ENCODE measurements at regions of chr9 and their contacts with region 1.

Region 1: DNA sequence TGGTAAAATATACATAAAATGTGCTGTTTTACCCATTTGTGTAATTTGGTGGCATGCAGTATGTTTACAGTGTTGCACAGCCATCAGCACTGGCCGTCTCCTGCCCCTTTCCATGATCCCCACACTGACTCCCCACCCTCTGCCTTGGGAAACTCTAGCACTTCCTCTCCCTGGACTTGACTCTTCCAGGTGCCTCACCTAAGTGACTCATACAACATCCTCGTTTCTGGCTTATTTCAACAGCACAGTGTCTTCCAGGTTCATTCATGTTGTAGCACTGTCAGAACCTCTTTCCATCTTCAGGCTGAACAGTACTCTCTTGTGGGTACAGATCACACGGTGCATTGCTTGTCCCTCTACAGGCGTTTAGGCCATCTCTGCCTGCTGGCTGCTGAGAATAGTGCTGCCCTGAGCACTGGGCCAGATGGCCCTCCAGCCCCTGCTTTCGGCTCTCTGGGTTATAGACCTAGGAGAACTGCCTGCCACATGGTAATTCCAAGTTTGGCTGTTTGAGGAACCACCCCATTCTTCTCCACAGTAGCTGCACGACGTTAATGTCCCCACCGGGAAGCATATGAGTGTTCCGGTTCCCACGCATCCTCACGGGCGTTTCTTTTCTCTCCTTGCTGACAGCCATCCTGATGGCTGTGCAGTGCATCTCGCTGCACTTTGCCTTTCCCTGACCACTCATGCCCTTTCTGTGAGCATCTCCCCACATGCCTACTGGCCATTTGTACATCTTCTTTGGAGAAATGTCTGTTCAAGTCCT is 211.8 kb downstream of the FANCC start:
- DNase-seq: peak; percentile 76
- ATAC-seq: peak; percentile 93
- H3K4me3 ChIP-seq: no peak overlapping the region
- H3K27ac ChIP-seq: peak overlapping the region; percentile 74
- H3K4me1 ChIP-seq: peaks cover 23% of the 10 kb centered on the region
- H3K27me3 ChIP-seq: no peaks in the 10 kb centered on the region
- CTCF ChIP-seq: no peak

Region 2: GRCh38 chr9:94534901-94535300 is 570.8 kb before region 1 on chr9:
- CTCF ChIA-PET with region 1: no interaction called
- POLR2A ChIA-PET with region 1: interaction called, 13 read pairs
- intact Hi-C with region 1: no loop called
- DNase-seq: no peak
- ATAC-seq: no peak
- H3K4me3 ChIP-seq: no peak overlapping the region
- H3K27ac ChIP-seq: no peak overlapping the region
- H3K4me1 ChIP-seq: no peaks in the 10 kb centered on the region
- H3K27me3 ChIP-seq: no peaks in the 10 kb centered on the region
- CTCF ChIP-seq: no peak

Region 3: DNA sequence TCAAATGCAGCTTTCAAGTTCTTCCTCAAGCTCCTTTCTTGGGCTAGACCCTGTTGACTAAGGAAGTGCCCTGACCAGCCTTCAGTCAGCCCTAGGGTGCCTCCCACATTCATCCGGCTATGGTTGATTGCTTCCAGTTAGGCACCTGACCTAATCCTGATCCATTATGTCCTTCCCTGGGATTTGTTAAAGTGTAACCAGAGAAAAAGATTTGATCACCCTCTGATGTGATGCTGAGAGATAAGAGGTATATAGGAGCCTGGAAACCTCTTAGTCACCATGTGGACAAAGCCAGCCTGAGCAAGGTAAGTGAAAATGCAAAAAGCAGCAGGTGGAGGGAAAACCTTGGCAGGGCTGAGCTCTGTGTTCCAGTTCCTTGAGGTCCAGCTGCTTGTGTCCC is 591.0 kb after region 1 on chr9:
- CTCF ChIA-PET with region 1: no interaction called
- POLR2A ChIA-PET with region 1: no interaction called
- intact Hi-C with region 1: no loop called
- DNase-seq: no peak
- ATAC-seq: no peak
- H3K4me3 ChIP-seq: no peak overlapping the region
- H3K27ac ChIP-seq: no peak overlapping the region
- H3K4me1 ChIP-seq: no peaks in the 10 kb centered on the region
- H3K27me3 ChIP-seq: peaks cover 9% of the 10 kb centered on the region; the same call in 1 of the 2 replicates
- CTCF ChIP-seq: no peak

Measured in PC-3 (cell line).